ENCODE measurements at regions of chr2 and their contacts with region 1.

Region 1: DNA sequence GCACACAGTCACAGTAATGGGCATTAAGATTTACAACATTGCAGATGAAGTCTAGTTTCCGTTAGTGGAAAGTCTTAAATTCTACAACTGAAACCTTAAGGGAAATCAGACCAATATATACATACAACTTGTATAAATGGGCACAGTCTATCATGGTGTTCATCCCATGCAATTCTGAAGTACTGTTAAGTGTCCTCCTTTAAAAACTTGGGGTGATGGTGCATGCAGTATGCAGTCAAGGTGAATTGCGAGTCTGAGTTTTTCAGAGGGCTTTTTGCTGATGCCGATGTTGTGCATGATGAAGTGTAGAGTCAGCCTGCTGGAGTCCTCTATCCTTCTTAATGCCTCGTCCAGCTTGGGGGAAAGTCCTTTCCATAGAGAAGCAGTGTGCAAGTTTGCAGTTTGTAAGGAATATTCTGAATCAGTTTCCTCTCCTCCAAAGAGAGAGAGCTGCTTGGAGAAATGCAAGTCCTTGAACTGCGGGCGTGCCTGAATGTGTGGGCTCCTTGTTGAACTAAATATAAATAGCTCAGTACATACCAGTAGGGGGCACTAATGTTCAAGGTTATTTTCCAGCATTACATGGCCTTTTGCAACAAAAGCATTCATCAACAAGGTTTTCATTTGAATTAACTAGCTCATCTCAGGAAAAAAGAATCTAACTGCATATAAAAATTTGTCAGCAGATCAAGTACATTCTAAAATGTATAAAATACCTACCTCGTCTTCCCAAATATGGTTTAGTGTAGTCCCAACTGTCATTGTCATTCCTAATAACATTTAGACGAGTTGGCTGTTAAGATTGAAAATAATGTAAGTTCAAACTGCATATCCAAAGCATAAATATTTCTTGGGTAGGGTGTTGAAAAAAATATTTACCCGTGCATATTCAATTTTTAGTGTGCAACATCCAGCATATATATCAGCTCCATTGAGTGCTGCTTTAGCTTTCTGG is 21.3 kb downstream of the HNRNPLL start:
- DNase-seq: peak in 16 of 35 experiments; percentile 6 to 87 (median 28)
- ATAC-seq: peak; percentile 78 to 90 (median 87)
- H3K4me3 ChIP-seq: no peak overlapping the region
- H3K4me3 Mint-ChIP-seq: no peak overlapping the region
- H3K27ac ChIP-seq: no peak overlapping the region
- H3K27ac Mint-ChIP-seq: no peak overlapping the region
- H3K4me1 ChIP-seq: peaks cover 0 to 4% of the 10 kb centered on the region in 2 experiments
- H3K4me1 Mint-ChIP-seq: peaks cover 6 to 39% (median 23%) of the 10 kb centered on the region in 3 donors
- H3K27me3 ChIP-seq: no peaks in the 10 kb centered on the region
- H3K27me3 Mint-ChIP-seq: no peaks in the 10 kb centered on the region

Region 2: GRCh38 chr2:38565333-38565732 is 16.1 kb before region 1 on chr2:
- CTCF ChIA-PET with region 1: interaction called, 3 to 17 read pairs
- POLR2A ChIA-PET with region 1: no interaction called
- DNase-seq: no peak
- ATAC-seq: no peak
- H3K4me3 ChIP-seq: no peak overlapping the region
- H3K4me3 Mint-ChIP-seq: no peak overlapping the region
- H3K27ac ChIP-seq: no peak overlapping the region
- H3K27ac Mint-ChIP-seq: no peak overlapping the region
- H3K4me1 ChIP-seq: no peaks in the 10 kb centered on the region
- H3K4me1 Mint-ChIP-seq: no peaks in the 10 kb centered on the region
- H3K27me3 ChIP-seq: no peaks in the 10 kb centered on the region
- H3K27me3 Mint-ChIP-seq: no peaks in the 10 kb centered on the region

Region 3: GRCh38 chr2:38634684-38635083 is 53.2 kb after region 1 on chr2:
- CTCF ChIA-PET with region 1: interaction called, 4 to 11 read pairs
- POLR2A ChIA-PET with region 1: no interaction called
- DNase-seq: no peak
- ATAC-seq: no peak
- H3K4me3 ChIP-seq: no peak overlapping the region
- H3K4me3 Mint-ChIP-seq: no peak overlapping the region
- H3K27ac ChIP-seq: no peak overlapping the region
- H3K27ac Mint-ChIP-seq: no peak overlapping the region
- H3K4me1 ChIP-seq: peaks cover 0 to 4% of the 10 kb centered on the region in 2 experiments
- H3K4me1 Mint-ChIP-seq: peaks cover 4 to 12% (median 10%) of the 10 kb centered on the region in 3 donors
- H3K27me3 ChIP-seq: no peaks in the 10 kb centered on the region
- H3K27me3 Mint-ChIP-seq: no peaks in the 10 kb centered on the region

Region 4: GRCh38 chr2:38682008-38682575 is 100.6 kb after region 1 on chr2:
- CTCF ChIA-PET with region 1: interaction called in 1 of 2 experiments, 30 read pairs
- POLR2A ChIA-PET with region 1: interaction called in 1 of 2 experiments, 3 read pairs
- DNase-seq: peak in 5 of 35 experiments; percentile 16 to 71 (median 21)
- ATAC-seq: peak; percentile 77 to 86 (median 84)
- H3K4me3 ChIP-seq: peak overlapping the region in 1 of 2 donors; percentile 25
- H3K4me3 Mint-ChIP-seq: peak overlapping the region; percentile 60 to 67 (median 61)
- H3K27ac ChIP-seq: peak overlapping the region; percentile 94
- H3K27ac Mint-ChIP-seq: peak overlapping the region; percentile 89 to 95
- H3K4me1 ChIP-seq: peaks cover 0 to 37% of the 10 kb centered on the region in 2 experiments
- H3K4me1 Mint-ChIP-seq: peaks cover 34 to 64% (median 40%) of the 10 kb centered on the region in 3 donors
- H3K27me3 ChIP-seq: no peaks in the 10 kb centered on the region
- H3K27me3 Mint-ChIP-seq: no peaks in the 10 kb centered on the region

Region 5: DNA sequence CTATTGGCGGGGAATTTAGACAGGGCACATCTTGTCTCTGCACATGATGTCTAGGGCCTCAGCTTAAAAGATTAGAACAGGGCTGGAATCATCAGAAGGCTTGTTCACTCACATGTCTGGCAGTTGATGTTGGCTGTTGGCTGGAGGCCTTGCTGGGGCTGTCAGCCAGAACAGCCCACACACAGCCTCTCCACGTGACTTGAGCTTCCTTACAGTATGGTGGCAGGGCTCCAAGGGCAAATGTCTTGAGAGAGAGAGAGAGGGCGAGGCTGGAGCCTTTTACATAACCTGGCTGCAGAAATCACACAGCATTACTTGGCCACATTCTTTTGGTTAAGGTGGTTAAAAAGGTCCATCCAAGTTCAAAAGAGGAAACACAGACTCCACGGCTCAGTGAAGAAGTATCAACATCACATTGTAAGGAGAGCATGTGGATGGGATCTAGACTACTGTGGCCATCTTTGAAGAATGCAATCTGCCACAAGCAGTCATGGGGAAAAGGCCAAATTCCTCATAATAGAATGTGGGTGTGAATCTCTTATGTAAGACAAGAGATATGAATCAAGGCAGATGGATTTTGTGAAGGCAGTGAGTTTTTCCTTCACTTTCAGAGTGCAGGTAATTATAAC is 139.3 kb after region 1 on chr2:
- CTCF ChIA-PET with region 1: interaction called, 17 to 96 read pairs
- POLR2A ChIA-PET with region 1: no interaction called
- DNase-seq: no peak
- ATAC-seq: no peak
- H3K4me3 ChIP-seq: no peak overlapping the region
- H3K4me3 Mint-ChIP-seq: no peak overlapping the region
- H3K27ac ChIP-seq: peak overlapping the region; percentile 4
- H3K27ac Mint-ChIP-seq: peak overlapping the region; percentile 56 to 77
- H3K4me1 ChIP-seq: peaks cover 14 to 22% of the 10 kb centered on the region in 2 experiments
- H3K4me1 Mint-ChIP-seq: peaks cover 30 to 55% (median 42%) of the 10 kb centered on the region in 3 donors
- H3K27me3 ChIP-seq: no peaks in the 10 kb centered on the region
- H3K27me3 Mint-ChIP-seq: no peaks in the 10 kb centered on the region

Region 6: DNA sequence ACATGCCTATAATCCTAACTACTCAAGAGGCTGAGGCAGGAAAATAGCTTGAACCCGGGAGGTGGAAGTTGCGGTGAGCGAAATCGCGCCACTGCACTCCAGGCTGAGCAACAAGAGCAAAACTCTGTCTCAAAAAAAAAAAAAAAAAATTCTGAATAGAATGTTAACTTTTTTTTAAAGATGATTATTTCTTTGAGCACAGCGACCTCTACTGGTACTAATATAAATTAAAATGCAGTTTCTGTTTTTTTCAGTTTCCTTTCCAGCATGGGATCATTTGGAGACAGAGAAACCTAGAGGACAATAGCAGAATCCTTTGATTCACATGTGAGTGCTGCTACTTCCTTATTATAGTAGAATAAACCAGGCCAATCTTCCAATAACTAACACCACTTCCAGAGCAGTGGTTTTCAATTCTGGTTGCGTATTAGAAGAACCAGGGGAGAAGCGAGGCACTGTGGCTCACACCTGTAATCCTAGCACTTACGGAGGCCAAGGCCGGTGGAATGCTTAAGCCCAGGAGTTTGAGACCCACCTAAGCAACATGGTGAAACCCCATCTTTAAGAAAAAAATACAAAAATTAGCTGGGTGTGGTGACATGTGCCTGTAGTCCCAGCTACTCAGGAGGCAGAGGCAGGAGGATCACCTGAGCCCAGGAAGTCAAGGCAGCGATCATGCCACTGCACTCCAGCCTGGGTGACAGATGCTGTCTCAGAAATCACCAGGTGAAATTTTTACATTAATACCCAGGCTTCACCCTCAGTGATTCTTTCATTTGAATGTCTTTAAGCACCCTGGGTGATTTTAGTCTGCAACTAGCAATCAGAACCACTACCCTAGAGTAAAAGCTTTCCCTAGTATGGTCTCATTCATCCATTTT is 159.6 kb after region 1 on chr2:
- CTCF ChIA-PET with region 1: interaction called, 6 to 97 read pairs
- POLR2A ChIA-PET with region 1: interaction called, 5 to 10 read pairs
- DNase-seq: peak in 13 of 35 experiments; percentile 9 to 75 (median 18)
- ATAC-seq: peak; percentile 15 to 41 (median 20)
- H3K4me3 ChIP-seq: no peak overlapping the region
- H3K4me3 Mint-ChIP-seq: no peak overlapping the region
- H3K27ac ChIP-seq: no peak overlapping the region
- H3K27ac Mint-ChIP-seq: peak overlapping the region; percentile 34 to 56
- H3K4me1 ChIP-seq: peaks cover 6 to 15% of the 10 kb centered on the region in 2 experiments
- H3K4me1 Mint-ChIP-seq: peaks cover 46 to 56% (median 49%) of the 10 kb centered on the region in 3 donors
- H3K27me3 ChIP-seq: no peaks in the 10 kb centered on the region
- H3K27me3 Mint-ChIP-seq: no peaks in the 10 kb centered on the region

Region 7: DNA sequence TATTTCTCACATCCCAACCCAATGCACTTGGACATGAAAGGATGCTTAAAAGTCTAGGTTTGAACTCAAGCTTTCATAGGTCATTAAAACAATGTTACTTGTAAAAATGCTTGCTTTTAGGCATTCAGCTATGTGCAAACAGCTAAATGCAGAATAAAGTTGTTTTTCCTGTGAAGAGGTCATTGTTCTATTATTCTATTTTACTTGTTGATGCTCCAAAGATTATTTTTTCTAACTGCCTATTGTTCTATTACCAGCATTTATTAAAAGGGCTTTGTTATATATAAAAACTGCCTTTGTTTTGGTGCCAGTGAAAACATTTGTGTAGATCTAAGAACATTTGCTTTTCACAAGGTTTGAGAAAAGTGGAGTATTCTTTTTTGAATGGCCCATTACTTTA is 1133.6 kb after region 1 on chr2:
- CTCF ChIA-PET with region 1: no interaction called
- POLR2A ChIA-PET with region 1: no interaction called
- DNase-seq: no peak
- ATAC-seq: no peak
- H3K4me3 ChIP-seq: no peak overlapping the region
- H3K4me3 Mint-ChIP-seq: no peak overlapping the region
- H3K27ac ChIP-seq: no peak overlapping the region
- H3K27ac Mint-ChIP-seq: no peak overlapping the region
- H3K4me1 ChIP-seq: no peaks in the 10 kb centered on the region
- H3K4me1 Mint-ChIP-seq: no peaks in the 10 kb centered on the region
- H3K27me3 ChIP-seq: no peaks in the 10 kb centered on the region
- H3K27me3 Mint-ChIP-seq: peaks cover 3 to 7% of the 10 kb centered on the region in 2 donors

Measured in T-cell (primary cell).